Endothelial cell of umbilical vein (primary cell): ENCODE measurements at regions of chr11 and their contacts with region 1.

Region 1: DNA sequence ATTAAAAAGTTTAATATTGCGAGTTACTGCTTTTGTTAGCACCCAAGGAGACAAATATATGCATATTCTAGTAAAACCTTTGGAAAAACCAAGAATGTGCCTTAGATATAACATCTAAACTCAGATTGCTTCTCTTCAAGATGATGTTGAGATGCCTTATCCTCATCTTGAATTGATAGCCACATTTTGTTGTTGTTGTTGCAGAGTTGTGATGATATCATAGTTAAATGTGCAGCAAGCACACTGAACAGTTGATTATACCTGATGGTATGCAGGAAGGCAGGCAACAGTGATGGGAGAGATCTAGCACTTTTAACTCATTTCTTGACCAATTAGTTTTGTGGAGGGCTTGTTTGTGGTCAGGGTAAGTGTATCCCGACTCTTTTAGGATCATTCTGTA is 48.0 kb downstream of the KDM2A start:
- DNase-seq: peak; percentile 8
- H3K4me3 ChIP-seq: no peak overlapping the region
- H3K27ac ChIP-seq: no peak overlapping the region
- H3K4me1 ChIP-seq: peaks cover 12% of the 10 kb centered on the region
- H3K27me3 ChIP-seq: no peaks in the 10 kb centered on the region
- CTCF ChIP-seq: no peak
- POLR2A ChIP-seq: no peak

Region 2: GRCh38 chr11:67082035-67082791 is 84.9 kb before region 1 on chr11:
- CTCF ChIA-PET with region 1: interaction called, 11 read pairs
- POLR2A ChIA-PET with region 1: no interaction called
- dilution Hi-C with region 1: no loop called
- intact Hi-C with region 1: loop called (anchors 1 kb)
- DNase-seq: peak; percentile 30
- H3K4me3 ChIP-seq: no peak overlapping the region
- H3K27ac ChIP-seq: no peak overlapping the region
- H3K4me1 ChIP-seq: no peaks in the 10 kb centered on the region
- H3K27me3 ChIP-seq: no peaks in the 10 kb centered on the region
- CTCF ChIP-seq: peak in 1 of 2 donors; percentile 18
- POLR2A ChIP-seq: no peak

Region 3: GRCh38 chr11:67099831-67100324 is 67.2 kb before region 1 on chr11:
- CTCF ChIA-PET with region 1: interaction called, 12 read pairs
- POLR2A ChIA-PET with region 1: no interaction called
- dilution Hi-C with region 1: no loop called
- intact Hi-C with region 1: loop called (anchors 5 kb)
- DNase-seq: no peak
- H3K4me3 ChIP-seq: no peak overlapping the region
- H3K27ac ChIP-seq: no peak overlapping the region
- H3K4me1 ChIP-seq: peaks cover 4% of the 10 kb centered on the region
- H3K27me3 ChIP-seq: peaks cover 0 to 2% of the 10 kb centered on the region in 2 experiments
- CTCF ChIP-seq: no peak
- POLR2A ChIP-seq: no peak

Region 4: GRCh38 chr11:67118801-67119584 is 48.1 kb before region 1 on chr11 and contains the start of gene KDM2A:
- CTCF ChIA-PET with region 1: interaction called, 9 read pairs
- POLR2A ChIA-PET with region 1: no interaction called
- dilution Hi-C with region 1: no loop called
- intact Hi-C with region 1: loop called (anchors 1 kb)
- DNase-seq: peak; percentile 98
- H3K4me3 ChIP-seq: peak within 1 kb of the TSS; percentile 83 to 96 (median 96)
- H3K27ac ChIP-seq: peak within 1 kb of the TSS; percentile 86
- H3K4me1 ChIP-seq: peaks cover 21% of the 10 kb centered on the region
- H3K27me3 ChIP-seq: no peaks in the 10 kb centered on the region
- CTCF ChIP-seq: no peak
- POLR2A ChIP-seq: peak; percentile 71
- total RNA-seq, gene KDM2A: 69.9 and 79.5 TPM in 2 replicates

Region 5: DNA sequence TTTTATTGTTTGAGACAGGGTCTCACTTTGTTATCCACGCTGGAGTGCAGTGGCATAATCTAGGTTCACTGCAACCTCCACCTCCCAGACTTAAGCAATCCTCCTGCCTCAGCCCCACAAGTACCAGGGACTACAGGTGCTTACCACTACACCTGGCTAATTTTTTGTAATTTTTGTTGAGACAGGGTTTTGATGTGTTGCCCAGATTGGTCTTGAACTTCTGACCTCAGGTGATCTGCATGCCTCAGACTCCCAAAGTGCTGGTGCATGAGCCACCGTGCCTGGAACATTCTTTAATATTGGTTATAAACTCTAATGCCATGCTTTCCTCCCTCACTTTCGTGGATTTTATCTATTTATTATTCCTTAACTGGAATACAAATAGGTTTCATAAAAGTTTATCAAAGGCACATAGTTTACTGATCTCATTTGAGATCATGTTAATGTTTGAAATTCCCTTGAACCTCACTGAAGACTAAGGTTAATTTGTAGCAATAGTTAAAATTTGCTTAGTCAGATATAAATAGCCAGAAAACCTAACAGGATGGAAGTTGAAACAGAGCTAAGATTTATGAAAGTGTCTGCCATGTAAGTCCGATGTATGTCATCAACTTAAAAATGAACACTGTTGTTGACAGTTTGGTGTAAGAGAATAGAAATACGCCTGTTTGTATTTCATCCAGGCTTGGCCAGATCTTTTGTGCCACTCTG is 20.4 kb before region 1 on chr11:
- CTCF ChIA-PET with region 1: interaction called, 10 read pairs
- POLR2A ChIA-PET with region 1: interaction called, 3 read pairs
- dilution Hi-C with region 1: no loop called
- intact Hi-C with region 1: no loop called
- DNase-seq: no peak
- H3K4me3 ChIP-seq: no peak overlapping the region
- H3K27ac ChIP-seq: peak overlapping the region; percentile 93
- H3K4me1 ChIP-seq: peaks cover 14% of the 10 kb centered on the region
- H3K27me3 ChIP-seq: no peaks in the 10 kb centered on the region
- CTCF ChIP-seq: no peak
- POLR2A ChIP-seq: no peak